Prostate gland (tissue), 2 donors: ENCODE measurements at regions of chr18 and their contacts with region 1.

Region 1: DNA sequence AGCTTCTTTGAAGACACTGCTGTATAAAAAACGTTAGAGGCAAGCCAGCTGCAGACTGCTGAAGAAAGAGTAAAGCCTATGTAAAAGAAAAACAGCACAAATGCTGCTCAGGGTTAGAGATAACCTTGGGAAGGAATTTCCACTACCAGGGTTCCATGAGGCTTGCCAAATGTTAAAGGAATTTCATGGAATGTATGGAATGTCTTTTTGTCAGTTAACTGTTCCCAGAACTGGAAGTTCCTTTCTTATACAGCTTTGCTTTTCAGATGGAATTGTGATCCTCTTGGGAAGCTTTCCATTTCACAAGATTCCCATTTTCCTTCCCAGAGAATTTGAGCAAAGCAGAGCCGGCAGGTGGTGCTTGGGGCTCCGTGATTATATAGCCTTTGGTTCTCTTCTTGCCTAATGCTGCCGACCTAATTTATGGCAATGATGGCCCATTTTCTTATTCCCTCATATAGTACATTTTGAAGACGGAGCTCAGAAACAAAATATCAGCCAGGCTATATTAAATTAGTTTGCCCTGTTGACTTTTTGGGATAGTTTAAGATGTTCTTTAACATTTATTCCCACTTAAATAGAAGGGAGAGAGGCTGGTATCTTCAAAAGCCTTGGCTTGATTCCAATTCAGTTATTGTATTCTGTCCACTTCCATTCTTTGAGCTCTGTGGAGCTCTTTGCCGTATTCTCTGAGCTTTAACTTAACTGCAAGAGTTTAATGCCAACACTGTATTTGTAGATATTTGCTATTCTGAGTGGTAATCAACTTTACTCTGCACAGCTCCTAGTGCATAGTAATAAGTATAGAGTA is 162.3 kb downstream of the PHLPP1 start:
- DNase-seq: no peak
- H3K4me3 ChIP-seq: no peak overlapping the region
- H3K27ac ChIP-seq: no peak overlapping the region
- H3K4me1 ChIP-seq: no peaks in the 10 kb centered on the region
- H3K27me3 ChIP-seq: no peaks in the 10 kb centered on the region
- CTCF ChIP-seq: no peak
- POLR2A ChIP-seq: no peak

Region 2: GRCh38 chr18:62863579-62864001 is 14.0 kb before region 1 on chr18:
- intact Hi-C with region 1: loop called (anchors 2 kb)
- DNase-seq: no peak
- H3K4me3 ChIP-seq: no peak overlapping the region
- H3K27ac ChIP-seq: no peak overlapping the region
- H3K4me1 ChIP-seq: no peaks in the 10 kb centered on the region
- H3K27me3 ChIP-seq: no peaks in the 10 kb centered on the region
- CTCF ChIP-seq: no peak
- POLR2A ChIP-seq: no peak

Region 3: GRCh38 chr18:62904396-62905285 is 27.0 kb after region 1 on chr18:
- intact Hi-C with region 1: no loop called
- DNase-seq: no peak
- H3K4me3 ChIP-seq: no peak overlapping the region
- H3K27ac ChIP-seq: no peak overlapping the region
- H3K4me1 ChIP-seq: no peaks in the 10 kb centered on the region
- H3K27me3 ChIP-seq: no peaks in the 10 kb centered on the region
- CTCF ChIP-seq: no peak
- POLR2A ChIP-seq: no peak